Heart left ventricle (tissue), 16 donors: ENCODE measurements at regions of chr16 and their contacts with region 1.

Region 1: GRCh38 chr16:78122774-78123315 is 23.4 kb downstream of the WWOX start:
- DNase-seq: no peak
- ATAC-seq: peak; percentile 67 to 89 (median 68)
- H3K4me3 ChIP-seq: no peak overlapping the region
- H3K27ac ChIP-seq: peak overlapping the region in 6 of 12 donors; percentile 4 to 44 (median 14)
- H3K4me1 ChIP-seq: peaks cover 0 to 20% (median 11%) of the 10 kb centered on the region in 12 donors
- H3K27me3 ChIP-seq: no peaks in the 10 kb centered on the region
- CTCF ChIP-seq: peak; percentile 21 to 72 (median 53)
- POLR2A ChIP-seq: no peak

Region 2: GRCh38 chr16:78227855-78228254 is 105.0 kb after region 1 on chr16:
- intact Hi-C with region 1: loop called in 5 of 10 experiments (anchors 2 to 5 kb)
- DNase-seq: no peak
- ATAC-seq: no peak
- H3K4me3 ChIP-seq: no peak overlapping the region
- H3K27ac ChIP-seq: no peak overlapping the region
- H3K4me1 ChIP-seq: peaks cover 0 to under 1% (median 0%) of the 10 kb centered on the region in 12 donors
- H3K27me3 ChIP-seq: no peaks in the 10 kb centered on the region
- CTCF ChIP-seq: peak in 9 of 12 donors; percentile 18 to 49 (median 36)
- POLR2A ChIP-seq: no peak

Region 3: DNA sequence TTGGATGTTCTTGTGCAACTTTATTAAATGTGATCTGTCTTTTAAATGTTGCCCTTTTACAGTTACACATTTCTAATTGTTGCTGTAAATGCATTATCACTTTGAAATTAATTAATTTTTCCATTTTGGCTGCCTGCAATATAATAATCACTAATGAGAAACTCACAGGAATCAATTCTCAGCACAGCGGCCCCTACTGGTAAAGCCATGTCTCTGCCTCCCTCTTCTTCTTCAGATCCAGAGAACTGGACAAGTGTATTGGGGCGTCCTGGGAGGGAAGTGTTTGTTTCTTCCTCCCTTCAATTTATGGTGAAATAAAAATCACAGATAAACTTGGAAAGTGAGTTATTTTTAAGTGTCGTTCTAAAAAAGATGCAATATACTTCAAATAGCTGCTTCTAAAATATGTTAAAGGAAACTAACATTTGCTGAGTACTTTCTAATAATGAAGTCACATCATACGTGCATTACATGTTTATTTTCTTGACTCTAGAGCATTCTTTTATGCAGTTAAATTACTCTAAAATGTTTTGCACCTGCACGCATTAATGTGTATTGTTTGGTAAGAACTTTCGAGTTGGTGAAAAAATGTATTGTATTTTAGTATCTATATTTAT is 314.6 kb after region 1 on chr16:
- intact Hi-C with region 1: loop called in 7 of 10 experiments (anchors 5 to 10 kb)
- DNase-seq: peak in 1 of 5 donors; percentile 23
- ATAC-seq: no peak
- H3K4me3 ChIP-seq: no peak overlapping the region
- H3K27ac ChIP-seq: no peak overlapping the region
- H3K4me1 ChIP-seq: no peaks in the 10 kb centered on the region
- H3K27me3 ChIP-seq: no peaks in the 10 kb centered on the region
- CTCF ChIP-seq: peak; percentile 79 to 93 (median 88)
- POLR2A ChIP-seq: no peak

Region 4: GRCh38 chr16:78761427-78761826 is 638.6 kb after region 1 on chr16:
- intact Hi-C with region 1: loop called in 1 of 10 experiments (anchors 10 kb)
- DNase-seq: no peak
- ATAC-seq: no peak
- H3K4me3 ChIP-seq: no peak overlapping the region
- H3K27ac ChIP-seq: no peak overlapping the region
- H3K4me1 ChIP-seq: peaks cover 0 to 4% (median 0%) of the 10 kb centered on the region in 12 donors
- H3K27me3 ChIP-seq: no peaks in the 10 kb centered on the region
- CTCF ChIP-seq: no peak
- POLR2A ChIP-seq: no peak

Region 5: DNA sequence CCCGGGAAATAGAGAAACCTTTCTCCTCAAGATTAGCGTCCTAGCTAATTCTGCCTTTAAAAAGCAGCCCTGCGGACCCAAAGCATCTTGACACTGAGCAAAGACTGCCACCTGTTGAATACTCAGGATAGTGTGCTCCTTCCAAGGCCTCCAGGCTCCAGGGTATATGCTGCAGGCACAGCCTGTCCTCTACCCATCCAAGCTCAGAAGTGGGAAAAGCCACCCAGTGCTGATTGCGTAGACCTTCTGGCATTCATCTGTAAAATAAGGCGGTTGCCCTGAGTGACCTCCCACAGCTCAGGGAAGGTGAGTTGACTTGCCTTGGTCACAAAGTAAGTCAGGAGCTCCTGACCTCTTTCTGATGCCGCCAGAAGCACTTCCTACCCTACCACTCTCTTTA is 1961.8 kb after region 1 on chr16:
- intact Hi-C with region 1: loop called in 1 of 10 experiments (anchors 10 kb)
- DNase-seq: peak in 4 of 5 donors; percentile 32 to 43 (median 38)
- ATAC-seq: peak; percentile 67 to 96 (median 92)
- H3K4me3 ChIP-seq: no peak overlapping the region
- H3K27ac ChIP-seq: no peak overlapping the region
- H3K4me1 ChIP-seq: peaks cover 0 to 5% (median 0%) of the 10 kb centered on the region in 12 donors
- H3K27me3 ChIP-seq: no peaks in the 10 kb centered on the region
- CTCF ChIP-seq: peak; percentile 43 to 76 (median 66)
- POLR2A ChIP-seq: no peak